ENCODE measurements at regions of chr20 and their contacts with region 1.

Region 1: GRCh38 chr20:44310664-44311639 is at the start of gene FITM2:
- DNase-seq: peak; percentile 100
- H3K4me3 ChIP-seq: peak within 1 kb of the TSS; percentile 80 to 93 (median 84)
- H3K27ac ChIP-seq: peak within 1 kb of the TSS in 7 of 8 donors; percentile 12 to 85 (median 70)
- H3K4me1 ChIP-seq: peaks cover 11 to 35% (median 24%) of the 10 kb centered on the region in 6 donors
- H3K27me3 ChIP-seq: peaks cover 0 to 6% (median 0%) of the 10 kb centered on the region in 7 donors
- CTCF ChIP-seq: peak; percentile 88 to 99 (median 98)
- POLR2A ChIP-seq: no peak
- total RNA-seq, gene FITM2: 3.4 to 5.7 (median 5.1) TPM

Region 2: DNA sequence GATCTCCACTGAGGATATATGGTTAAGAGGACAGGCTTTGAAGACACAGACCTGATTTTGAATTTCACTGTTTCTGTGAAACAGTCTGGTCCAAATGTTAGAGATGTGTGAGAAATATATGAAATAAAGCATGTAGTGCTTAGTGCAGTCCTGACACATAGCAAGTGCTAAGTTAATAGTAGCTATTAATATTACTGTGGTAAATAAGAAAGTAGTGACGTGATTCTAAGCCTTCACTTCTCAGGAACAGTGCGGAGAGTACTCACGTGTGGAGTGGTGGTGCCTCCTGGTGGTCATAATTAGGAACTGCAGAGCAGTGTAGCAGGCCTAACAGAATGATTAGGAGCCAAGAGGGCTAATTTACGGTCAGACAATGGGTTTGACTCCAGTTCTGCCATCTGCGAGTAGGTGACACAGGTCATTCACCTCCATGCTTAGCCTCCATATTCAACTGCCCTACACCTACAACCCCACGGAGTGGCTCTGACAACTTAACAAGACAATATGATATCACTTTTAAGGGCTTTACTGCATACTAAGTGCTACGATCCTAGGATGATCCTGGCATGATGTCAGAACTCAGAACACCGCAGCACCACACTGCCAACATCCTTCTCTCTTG is 230.2 kb before region 1 on chr20:
- intact Hi-C with region 1: no loop called
- DNase-seq: no peak
- H3K4me3 ChIP-seq: no peak overlapping the region
- H3K27ac ChIP-seq: no peak overlapping the region
- H3K4me1 ChIP-seq: peaks cover 0 to 12% (median 2%) of the 10 kb centered on the region in 6 donors
- H3K27me3 ChIP-seq: no peaks in the 10 kb centered on the region
- CTCF ChIP-seq: peak; percentile 94 to 99 (median 99)
- POLR2A ChIP-seq: no peak

Region 3: GRCh38 chr20:44217342-44218092 is 93.4 kb before region 1 on chr20:
- intact Hi-C with region 1: loop called (anchors 5 kb)
- DNase-seq: peak; percentile 86
- H3K4me3 ChIP-seq: peak overlapping the region in 3 of 8 donors; percentile 4 to 44 (median 14)
- H3K27ac ChIP-seq: peak overlapping the region in 4 of 8 donors; percentile 37 to 57 (median 52)
- H3K4me1 ChIP-seq: peaks cover 8 to 58% (median 31%) of the 10 kb centered on the region in 6 donors
- H3K27me3 ChIP-seq: no peaks in the 10 kb centered on the region
- CTCF ChIP-seq: peak; percentile 62 to 89 (median 81)
- POLR2A ChIP-seq: no peak

Measured in spleen (tissue), 13 donors.